Activated B cell treated with CpG ODN at 0.5 μM for 24 hours (primary cell): ENCODE measurements at regions of chr4 and their contacts with region 1.

Region 1: GRCh38 chr4:102444752-102445151 is 56.4 kb upstream of the NFKB1 start:
- DNase-seq: no peak
- ATAC-seq: no peak
- H3K4me3 Mint-ChIP-seq: no peak overlapping the region
- H3K27ac Mint-ChIP-seq: no peak overlapping the region
- H3K4me1 Mint-ChIP-seq: peaks cover 2% of the 10 kb centered on the region
- H3K27me3 Mint-ChIP-seq: no peaks in the 10 kb centered on the region
- CTCF ChIP-seq: no peak

Region 2: DNA sequence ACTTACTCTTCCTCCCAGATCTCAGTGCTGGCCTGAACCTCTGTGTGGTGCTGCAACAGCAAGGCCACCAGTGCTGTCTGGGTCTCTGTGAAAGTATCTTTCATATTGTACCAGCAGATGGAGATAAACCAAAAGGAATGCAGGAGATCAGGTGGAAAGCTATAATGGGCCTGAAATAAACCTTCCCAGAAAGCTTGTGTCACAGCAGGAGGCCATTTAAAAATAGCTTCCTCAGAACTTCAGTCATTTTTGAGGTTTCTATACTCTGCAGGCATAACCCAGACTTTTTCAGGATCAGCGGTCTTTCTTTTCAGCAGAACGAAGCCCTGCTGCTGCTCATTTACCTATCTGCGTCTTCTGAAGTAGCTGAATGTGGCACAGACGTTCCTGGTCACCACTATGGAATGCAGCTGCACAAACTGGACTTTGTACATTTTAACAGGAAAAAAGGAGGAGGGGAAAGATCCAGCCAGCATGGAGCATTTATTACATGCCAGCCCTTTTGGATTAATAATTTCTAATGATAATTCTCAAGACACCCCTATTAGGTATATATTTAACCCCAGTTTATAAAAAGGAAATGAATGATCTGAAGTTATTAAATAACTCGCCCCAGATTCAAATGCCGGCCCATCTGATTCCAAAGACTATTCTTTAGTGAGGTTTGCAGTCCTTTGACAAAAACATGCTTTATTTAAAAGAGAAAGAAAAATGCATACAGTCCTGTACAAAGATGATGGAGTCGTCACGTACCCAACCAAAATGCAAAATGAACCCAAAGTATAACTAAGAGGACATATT is 176.1 kb after region 1 on chr4:
- CTCF ChIA-PET with region 1: interaction called, 10 read pairs
- POLR2A ChIA-PET with region 1: no interaction called
- intact Hi-C with region 1: loop called (anchors 1 kb)
- DNase-seq: no peak
- ATAC-seq: no peak
- H3K4me3 Mint-ChIP-seq: no peak overlapping the region
- H3K27ac Mint-ChIP-seq: peak overlapping the region; percentile 30
- H3K4me1 Mint-ChIP-seq: peaks cover 27% of the 10 kb centered on the region
- H3K27me3 Mint-ChIP-seq: no peaks in the 10 kb centered on the region
- CTCF ChIP-seq: no peak